ENCODE measurements at regions of chr20 and their contacts with region 1.

Region 1: DNA sequence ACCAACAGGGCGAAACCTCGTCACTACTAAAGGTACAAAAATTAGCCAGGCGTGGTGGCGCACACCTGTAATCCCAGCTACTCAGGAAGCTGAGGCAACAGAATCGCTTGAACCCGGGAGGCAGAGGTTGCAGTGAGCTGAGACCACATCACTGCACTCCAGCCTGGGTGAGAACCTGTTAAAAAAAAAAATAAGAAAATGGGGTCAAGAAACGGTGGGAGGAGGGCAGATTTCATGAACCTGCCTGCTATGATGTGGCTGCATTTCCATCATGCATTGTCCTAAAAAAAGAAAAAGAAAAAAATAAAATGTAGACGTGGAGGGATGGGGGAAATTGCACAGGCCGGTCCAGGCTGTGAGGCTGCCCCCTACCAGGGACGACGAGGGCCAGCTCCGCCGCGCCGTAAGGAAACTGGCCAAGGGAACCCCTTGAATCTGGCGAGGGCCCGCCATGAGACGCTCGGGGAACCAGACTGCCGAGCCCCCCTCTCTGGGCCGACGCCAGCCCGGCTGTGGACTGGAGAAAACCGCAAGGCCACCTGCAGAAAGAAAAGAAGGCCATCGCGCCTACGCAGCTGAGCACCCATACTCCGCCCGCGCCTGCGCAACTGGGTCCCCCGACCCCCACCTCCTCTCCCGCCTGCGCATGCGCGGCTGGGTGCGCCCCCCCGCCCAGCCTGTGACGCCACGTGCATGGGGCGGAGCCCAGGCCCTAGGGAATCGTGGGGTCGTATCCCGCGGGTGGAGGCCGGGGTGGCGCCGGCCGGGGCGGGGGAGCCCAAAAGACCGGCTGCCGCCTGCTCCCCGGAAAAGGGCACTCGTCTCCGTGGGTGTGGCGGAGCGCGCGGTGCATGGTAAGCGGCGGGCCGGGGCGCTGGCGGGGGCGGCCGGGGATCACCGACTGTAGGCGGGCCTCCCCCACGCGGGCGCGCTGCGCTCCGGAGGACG is at the start of gene ENTPD6:
- DNase-seq: peak; percentile 96
- H3K4me3 ChIP-seq: peak within 1 kb of the TSS; percentile 64 to 98 (median 80)
- H3K27ac ChIP-seq: peak within 1 kb of the TSS; percentile 84 to 94 (median 91)
- H3K4me1 ChIP-seq: peaks cover 22 to 44% (median 34%) of the 10 kb centered on the region in 4 donors
- H3K27me3 ChIP-seq: no peaks in the 10 kb centered on the region
- CTCF ChIP-seq: peak in 4 of 5 experiments; percentile 4 to 28 (median 10)
- EP300 ChIP-seq: no peak
- POLR2A ChIP-seq: peak; percentile 76
- total RNA-seq, gene ENTPD6: 163 to 261 (median 224) TPM

Region 2: GRCh38 chr20:25407311-25408169 is 212.3 kb after region 1 on chr20 and contains the start of gene GINS1:
- in situ Hi-C with region 1: loop called in 1 of 4 experiments (anchors 10 kb)
- intact Hi-C with region 1: no loop called
- DNase-seq: peak; percentile 85
- H3K4me3 ChIP-seq: peak within 1 kb of the TSS; percentile 51 to 69 (median 56)
- H3K27ac ChIP-seq: peak within 1 kb of the TSS; percentile 70 to 80 (median 73)
- H3K4me1 ChIP-seq: peaks cover 0 to 15% (median 7%) of the 10 kb centered on the region in 4 donors
- H3K27me3 ChIP-seq: no peaks in the 10 kb centered on the region
- CTCF ChIP-seq: no peak
- EP300 ChIP-seq: no peak
- POLR2A ChIP-seq: peak; percentile 42
- total RNA-seq, gene GINS1: 1.3 to 1.4 TPM in 2 of 4 donors, not detected in the others

Measured in transverse colon (tissue), 4 donors.